Adrenal gland (tissue), 19 donors: ENCODE measurements at regions of chr14 and their contacts with region 1.

Region 1: GRCh38 chr14:32076278-32077080 is 625 bp upstream of the ARHGAP5 start:
- DNase-seq: peak; percentile 96 to 98 (median 97)
- H3K4me3 ChIP-seq: peak overlapping the region; percentile 1 to 95 (median 48)
- H3K27ac ChIP-seq: peak overlapping the region; percentile 20 to 99 (median 99)
- H3K4me1 ChIP-seq: peaks cover 4 to 34% of the 10 kb centered on the region in 2 donors
- H3K27me3 ChIP-seq: no peaks in the 10 kb centered on the region
- CTCF ChIP-seq: no peak
- POLR2A ChIP-seq: peak; percentile 86 to 89

Region 2: GRCh38 chr14:31937721-31938346 is 138.6 kb before region 1 on chr14:
- intact Hi-C with region 1: loop called in 1 of 2 experiments (anchors 10 kb)
- DNase-seq: peak; percentile 54 to 90 (median 88)
- H3K4me3 ChIP-seq: no peak overlapping the region
- H3K27ac ChIP-seq: peak overlapping the region in 1 of 5 donors; percentile 14
- H3K4me1 ChIP-seq: peaks cover 8 to 18% of the 10 kb centered on the region in 2 donors
- H3K27me3 ChIP-seq: no peaks in the 10 kb centered on the region
- CTCF ChIP-seq: no peak
- POLR2A ChIP-seq: no peak

Region 3: GRCh38 chr14:31988244-31988643 is 88.2 kb before region 1 on chr14:
- intact Hi-C with region 1: no loop called
- DNase-seq: no peak
- H3K4me3 ChIP-seq: no peak overlapping the region
- H3K27ac ChIP-seq: no peak overlapping the region
- H3K4me1 ChIP-seq: peaks cover 0 to 10% of the 10 kb centered on the region in 2 donors
- H3K27me3 ChIP-seq: no peaks in the 10 kb centered on the region
- CTCF ChIP-seq: no peak
- POLR2A ChIP-seq: no peak

Region 4: GRCh38 chr14:32202998-32203882 is 126.8 kb after region 1 on chr14 and contains the start of gene RNU6-8:
- intact Hi-C with region 1: loop called (anchors 2 to 5 kb)
- DNase-seq: peak; percentile 88 to 94 (median 93)
- H3K4me3 ChIP-seq: peak within 1 kb of the TSS; percentile 27 to 64 (median 40)
- H3K27ac ChIP-seq: peak within 1 kb of the TSS; percentile 41 to 95 (median 90)
- H3K4me1 ChIP-seq: peaks cover 0 to 23% of the 10 kb centered on the region in 2 donors
- H3K27me3 ChIP-seq: no peaks in the 10 kb centered on the region
- CTCF ChIP-seq: no peak
- POLR2A ChIP-seq: peak; percentile 75 to 78
- total RNA-seq, gene RNU6-8: not detected

Region 5: DNA sequence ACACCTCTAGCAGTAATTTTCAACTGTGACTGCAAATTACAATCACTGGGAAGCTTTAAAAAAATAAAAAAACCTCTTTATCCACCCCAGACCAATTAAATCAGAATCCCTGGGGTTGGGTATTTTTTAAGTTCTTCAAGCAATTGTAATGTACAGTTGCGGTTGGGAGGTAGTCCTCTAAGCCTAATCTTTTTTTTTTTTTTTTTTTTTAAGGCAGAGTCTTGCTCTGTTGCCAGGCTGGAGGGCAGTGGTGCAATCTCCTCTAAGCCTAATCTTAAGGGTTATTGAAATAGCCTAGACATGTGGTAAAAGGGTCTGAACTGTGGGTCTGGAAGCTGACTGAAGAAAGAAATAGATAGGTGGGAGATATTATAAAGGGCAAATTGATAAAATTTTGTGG is 483.1 kb after region 1 on chr14:
- intact Hi-C with region 1: loop called in 1 of 2 experiments (anchors 10 kb)
- DNase-seq: peak in 1 of 7 donors; percentile 11
- H3K4me3 ChIP-seq: no peak overlapping the region
- H3K27ac ChIP-seq: no peak overlapping the region
- H3K4me1 ChIP-seq: peaks cover 0 to 20% of the 10 kb centered on the region in 2 donors
- H3K27me3 ChIP-seq: no peaks in the 10 kb centered on the region
- CTCF ChIP-seq: no peak
- POLR2A ChIP-seq: no peak